Activated CD4-positive, alpha-beta T cell treated with anti-CD3 and anti-CD28 coated beads for 36 hours (primary cell): ENCODE measurements at regions of chr2 and their contacts with region 1.

Region 1: DNA sequence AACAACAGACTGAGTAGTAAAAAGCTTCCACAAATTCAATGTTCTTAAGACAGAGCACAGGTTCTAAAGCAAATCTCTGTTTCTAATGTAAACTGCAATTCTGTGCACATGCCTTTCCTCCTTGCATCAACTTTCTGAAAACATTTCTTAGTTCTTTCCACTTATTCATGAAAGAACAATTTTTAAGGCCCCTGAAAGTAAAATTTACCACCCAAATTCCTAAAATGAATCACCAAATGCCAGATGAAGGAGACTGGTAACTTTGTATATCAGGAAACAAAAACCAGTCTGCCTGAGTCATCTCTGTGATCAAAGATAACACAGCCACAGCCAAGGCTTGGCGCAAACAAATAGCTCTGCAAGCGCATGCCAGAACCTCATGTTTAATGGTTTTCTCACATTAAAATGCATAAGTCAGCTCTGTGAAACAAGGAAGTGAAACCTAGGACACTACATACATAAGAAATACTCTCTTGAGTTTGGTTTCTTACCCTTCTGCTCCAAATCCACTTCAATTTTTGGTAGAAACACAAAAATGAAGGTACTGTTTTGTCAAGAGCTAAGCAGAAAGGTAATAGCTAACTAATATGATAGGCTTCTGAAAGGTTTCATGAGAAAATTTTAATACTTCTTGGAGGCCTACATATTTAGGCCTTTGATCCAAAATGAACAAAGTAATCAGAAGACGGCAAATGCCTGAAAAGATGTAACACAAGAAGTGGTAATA is 169.4 kb downstream of the THADA start:
- DNase-seq: peak; percentile 82
- ATAC-seq: peak; percentile 94
- H3K4me3 Mint-ChIP-seq: no peak overlapping the region
- H3K27ac Mint-ChIP-seq: peak overlapping the region; percentile 43
- H3K4me1 Mint-ChIP-seq: peaks cover 34% of the 10 kb centered on the region
- H3K27me3 Mint-ChIP-seq: peaks cover 2% of the 10 kb centered on the region

Region 2: GRCh38 chr2:43178602-43179542 is 247.6 kb before region 1 on chr2:
- CTCF ChIA-PET with region 1: no interaction called
- POLR2A ChIA-PET with region 1: no interaction called
- intact Hi-C with region 1: loop called in 1 of 2 experiments (anchors 1 kb)
- DNase-seq: peak; percentile 57
- ATAC-seq: peak; percentile 10
- H3K4me3 Mint-ChIP-seq: peak overlapping the region; percentile 16
- H3K27ac Mint-ChIP-seq: peak overlapping the region; percentile 90
- H3K4me1 Mint-ChIP-seq: peaks cover 69% of the 10 kb centered on the region
- H3K27me3 Mint-ChIP-seq: no peaks in the 10 kb centered on the region

Region 3: DNA sequence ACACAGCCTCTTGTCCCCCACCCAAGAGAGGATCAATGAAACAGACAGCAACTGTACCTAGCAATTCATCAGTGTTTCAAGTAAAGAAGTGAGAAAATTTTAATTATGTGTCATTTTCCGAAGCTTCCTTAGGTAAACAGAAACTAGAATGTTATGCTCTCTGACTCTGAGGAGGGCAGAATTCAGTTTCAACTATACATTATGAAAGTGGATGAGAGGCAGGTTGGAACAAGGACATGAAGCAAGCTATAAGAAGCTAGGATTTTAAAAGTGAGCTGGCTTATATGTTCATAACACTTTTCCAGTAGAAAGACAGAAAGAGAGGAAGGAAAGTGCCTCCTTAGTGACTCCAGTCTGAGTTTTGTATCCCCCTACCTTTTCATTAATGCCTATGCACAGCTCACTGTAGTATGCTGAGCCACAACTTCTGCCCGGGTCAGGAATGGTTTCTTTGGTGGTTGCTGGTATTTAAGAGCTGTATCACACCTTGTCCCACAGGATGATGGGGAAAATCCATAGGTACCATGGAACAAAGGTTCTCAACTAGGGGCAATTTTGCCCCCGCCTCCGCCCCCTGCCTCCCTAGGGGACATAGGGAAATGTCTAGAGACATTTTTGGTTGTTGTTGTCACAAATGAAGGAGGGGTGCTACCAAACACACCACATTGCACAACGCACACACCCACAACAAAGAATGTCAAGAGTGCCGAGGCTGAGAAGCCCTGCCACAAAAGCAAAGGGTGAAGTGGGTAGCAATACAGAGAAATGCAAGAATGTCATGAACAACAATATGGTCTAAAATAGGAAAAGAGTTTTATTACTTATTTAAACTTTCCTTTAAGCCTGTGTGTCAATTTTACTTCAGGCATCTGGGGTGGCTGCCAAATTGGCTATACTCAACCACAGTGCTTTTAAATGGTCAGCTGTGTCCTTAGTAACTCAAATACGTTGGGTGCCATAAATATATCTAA is 39.1 kb before region 1 on chr2:
- CTCF ChIA-PET with region 1: interaction called, 3 read pairs
- POLR2A ChIA-PET with region 1: interaction called, 3 read pairs
- intact Hi-C with region 1: loop called in 1 of 2 experiments (anchors 1 kb)
- DNase-seq: peak; percentile 12
- ATAC-seq: peak; percentile 90
- H3K4me3 Mint-ChIP-seq: no peak overlapping the region
- H3K27ac Mint-ChIP-seq: peak overlapping the region; percentile 11
- H3K4me1 Mint-ChIP-seq: peaks cover 19% of the 10 kb centered on the region
- H3K27me3 Mint-ChIP-seq: no peaks in the 10 kb centered on the region

Region 4: DNA sequence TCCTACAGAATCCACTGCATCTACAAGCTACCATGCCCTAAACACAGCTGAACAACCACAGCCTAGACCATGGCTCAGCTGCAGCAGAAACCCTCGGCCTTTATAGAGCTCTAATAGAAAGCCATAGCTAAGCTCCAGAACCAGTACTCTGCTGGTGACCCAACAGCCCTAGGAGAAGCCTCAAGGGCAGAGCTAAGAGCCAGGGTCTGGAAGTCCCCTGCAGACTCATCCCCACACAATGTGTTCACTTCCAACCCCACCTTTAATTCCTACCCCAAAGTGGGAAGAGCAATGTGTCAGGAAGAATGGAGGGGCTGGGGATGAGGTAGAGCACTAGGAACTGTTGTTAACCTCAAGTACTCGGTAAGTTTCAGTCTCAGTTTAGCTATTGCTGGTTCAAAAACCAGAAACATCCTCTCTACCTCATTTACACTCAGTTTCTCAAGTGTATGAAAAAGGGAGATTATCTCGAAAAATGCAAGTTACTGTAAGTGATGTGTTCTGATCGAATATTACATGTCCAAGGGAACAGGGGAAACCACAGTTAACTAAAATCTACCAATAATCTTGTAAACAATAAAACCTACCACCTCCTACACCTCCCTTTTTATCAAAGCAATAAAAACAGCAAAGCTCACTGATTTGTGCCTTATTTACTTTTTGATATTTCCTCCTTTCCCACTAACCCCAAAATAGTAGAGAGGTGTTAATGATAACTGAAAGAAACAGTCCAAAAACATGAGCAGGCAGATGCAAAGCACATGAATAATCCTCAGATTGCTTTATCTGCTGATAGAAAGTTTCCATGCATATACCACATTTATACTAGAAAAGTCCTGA is 133.1 kb after region 1 on chr2:
- CTCF ChIA-PET with region 1: no interaction called
- POLR2A ChIA-PET with region 1: no interaction called
- intact Hi-C with region 1: loop called in 1 of 2 experiments (anchors 1 kb)
- DNase-seq: peak; percentile 33
- ATAC-seq: peak; percentile 94
- H3K4me3 Mint-ChIP-seq: peak overlapping the region; percentile 16
- H3K27ac Mint-ChIP-seq: peak overlapping the region; percentile 87
- H3K4me1 Mint-ChIP-seq: peaks cover 53% of the 10 kb centered on the region
- H3K27me3 Mint-ChIP-seq: no peaks in the 10 kb centered on the region

Region 5: DNA sequence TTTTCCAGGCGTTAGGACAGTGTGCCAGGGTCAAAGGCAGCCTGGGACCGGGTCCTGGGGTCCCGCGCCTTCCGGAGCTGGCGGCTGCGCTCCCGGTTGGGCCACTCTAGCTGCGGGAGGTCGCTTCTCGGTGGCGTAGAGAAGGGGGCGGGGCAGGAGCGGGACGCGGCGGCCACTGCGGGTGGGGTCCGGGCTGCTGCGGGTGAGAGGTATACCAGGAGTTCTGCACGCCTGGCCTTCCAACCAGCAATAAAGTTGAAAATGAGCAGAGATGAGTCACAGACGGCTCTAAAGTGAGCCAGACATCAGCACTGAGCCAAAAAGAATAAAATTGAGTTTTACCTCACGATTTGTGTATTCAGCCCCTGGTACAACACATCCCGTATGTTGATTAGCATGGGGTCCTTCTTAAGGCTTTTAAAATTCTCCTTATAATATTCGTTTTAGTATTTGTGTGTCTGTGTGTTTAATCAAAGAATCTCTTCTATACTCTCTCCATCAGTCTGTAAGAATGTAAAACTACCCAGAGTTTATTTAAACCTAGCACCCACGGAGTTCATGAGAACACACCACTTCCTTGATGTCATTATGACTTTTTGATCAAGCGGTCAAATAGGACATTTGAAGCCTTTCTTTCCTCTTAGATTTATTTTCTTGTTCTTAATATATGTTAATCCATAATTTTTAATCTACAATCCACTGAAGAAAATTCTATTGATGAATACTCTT is 250.0 kb after region 1 on chr2 and contains the start of gene C1GALT1C1L:
- CTCF ChIA-PET with region 1: no interaction called
- POLR2A ChIA-PET with region 1: no interaction called
- intact Hi-C with region 1: no loop called
- DNase-seq: peak; percentile 34
- ATAC-seq: peak; percentile 61
- H3K4me3 Mint-ChIP-seq: peak within 1 kb of the TSS; percentile 26
- H3K27ac Mint-ChIP-seq: no peak within 1 kb of the TSS
- H3K4me1 Mint-ChIP-seq: peaks cover 2% of the 10 kb centered on the region
- H3K27me3 Mint-ChIP-seq: peaks cover 26% of the 10 kb centered on the region
- total RNA-seq, gene C1GALT1C1L: not detected